ENCODE measurements at regions of chr11 and their contacts with region 1.

Region 1: GRCh38 chr11:61792310-61793085 is at the starts of genes FEN1 and TMEM258:
- DNase-seq: peak; percentile 89 to 94 (median 90)
- ATAC-seq: peak; percentile 91
- H3K4me3 ChIP-seq: peak within 1 kb of the TSS; percentile 83
- H3K27ac ChIP-seq: peak within 1 kb of the TSS; percentile 100
- H3K4me1 ChIP-seq: peaks cover 16 to 18% of the 10 kb centered on the region in 2 experiments; a peak in 4 of 5 replicates
- H3K27me3 ChIP-seq: no peaks in the 10 kb centered on the region
- CTCF ChIP-seq: no peak
- EP300 ChIP-seq: no peak
- POLR2A ChIP-seq: peak; percentile 94
- RAD21 ChIP-seq: no peak
- polyA plus RNA-seq, gene FEN1: 58.1 to 86.8 TPM
- polyA plus RNA-seq, gene TMEM258: 794 to 856 TPM

Region 2: DNA sequence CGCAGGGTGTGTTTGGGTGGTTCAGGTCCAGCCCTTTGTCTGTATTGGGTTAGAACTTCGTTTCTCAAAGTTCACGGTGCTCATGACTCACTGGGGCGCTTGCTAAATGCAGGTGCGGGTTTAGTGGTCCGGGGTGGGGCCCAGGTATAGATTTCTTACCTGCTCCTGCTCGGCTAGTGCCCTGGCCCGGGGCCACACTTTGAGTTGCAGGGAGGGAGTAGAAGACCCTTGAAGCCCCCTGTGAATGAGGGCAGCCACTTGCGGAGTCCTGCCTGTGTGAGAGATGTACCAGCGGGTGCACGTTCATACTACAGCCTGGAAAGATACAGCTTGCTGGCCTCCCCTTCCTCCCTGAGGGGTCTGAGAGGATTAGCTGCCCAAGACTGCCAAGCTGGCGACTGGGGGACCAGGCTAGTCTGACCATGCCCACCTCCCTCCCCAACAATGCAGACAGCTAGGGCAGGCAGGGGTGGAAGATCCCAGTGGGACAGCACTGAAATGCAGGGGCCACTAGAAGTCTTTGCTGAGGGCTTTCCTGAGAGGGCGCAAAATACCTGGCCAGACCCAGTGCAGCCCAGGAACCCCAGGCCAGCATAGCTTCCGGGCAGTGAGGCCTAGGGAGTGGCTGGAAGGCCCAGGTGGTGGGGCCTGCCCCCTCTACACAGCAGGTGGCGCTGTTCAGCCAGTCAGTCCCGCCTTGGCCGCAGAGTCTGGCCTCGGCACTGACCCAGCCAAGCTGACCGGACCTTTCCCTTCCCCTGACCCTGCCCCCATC is 45.1 kb before region 1 on chr11:
- CTCF ChIA-PET with region 1: interaction called, 4 read pairs
- POLR2A ChIA-PET with region 1: interaction called, 13 read pairs
- in situ Hi-C with region 1: loop called (anchors 5 kb)
- intact Hi-C with region 1: loop called (anchors 1 kb)
- DNase-seq: peak; percentile 86 to 90 (median 88)
- ATAC-seq: peak; percentile 90
- H3K4me3 ChIP-seq: no peak overlapping the region
- H3K27ac ChIP-seq: no peak overlapping the region
- H3K4me1 ChIP-seq: peaks cover 43 to 84% of the 10 kb centered on the region in 2 experiments
- H3K27me3 ChIP-seq: no peaks in the 10 kb centered on the region
- CTCF ChIP-seq: peak; percentile 94 to 96 (median 95)
- EP300 ChIP-seq: no peak
- POLR2A ChIP-seq: no peak
- RAD21 ChIP-seq: peak; percentile 90 to 97

Region 3: DNA sequence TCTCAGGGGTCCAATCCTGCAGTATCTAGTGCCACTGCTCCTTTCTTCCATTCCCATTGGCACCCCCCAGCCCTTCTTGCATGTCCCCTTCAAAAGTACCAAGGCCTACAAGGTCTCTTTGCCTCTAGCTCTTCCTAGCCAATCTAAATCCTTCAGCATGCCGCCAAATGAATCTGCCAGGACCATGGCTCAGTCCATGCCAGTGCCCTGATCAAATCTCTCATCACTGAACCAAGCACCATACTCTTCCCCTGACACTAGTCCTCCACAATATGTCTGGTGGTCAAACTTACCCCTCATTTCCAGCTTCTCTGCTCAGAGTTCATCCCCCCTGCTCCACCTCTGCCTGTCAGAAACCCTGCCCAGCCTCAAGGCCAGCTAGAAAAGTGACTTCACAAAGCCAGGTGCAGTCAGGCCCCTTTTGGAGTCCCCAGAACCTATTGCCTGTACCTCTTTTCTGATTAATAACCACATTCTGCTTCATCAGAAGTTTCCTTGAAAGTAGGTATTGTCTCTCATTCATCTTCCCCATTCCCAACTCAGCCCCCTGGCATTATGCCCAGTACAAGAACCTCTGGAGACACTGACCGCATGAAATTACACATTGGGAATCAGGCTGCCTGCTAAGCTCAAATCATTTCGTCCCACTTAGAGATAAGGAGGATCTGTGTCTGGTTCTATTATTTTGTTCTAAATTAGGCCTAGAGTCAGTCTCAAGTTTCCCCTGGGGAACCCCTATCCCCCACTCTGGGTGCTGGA is 11.6 kb after region 1 on chr11:
- CTCF ChIA-PET with region 1: no interaction called
- POLR2A ChIA-PET with region 1: interaction called, 25 read pairs
- in situ Hi-C with region 1: no loop called
- intact Hi-C with region 1: no loop called
- DNase-seq: no peak
- ATAC-seq: no peak
- H3K4me3 ChIP-seq: no peak overlapping the region
- H3K27ac ChIP-seq: no peak overlapping the region
- H3K4me1 ChIP-seq: peaks cover 37 to 53% of the 10 kb centered on the region in 2 experiments
- H3K27me3 ChIP-seq: no peaks in the 10 kb centered on the region
- CTCF ChIP-seq: no peak
- EP300 ChIP-seq: no peak
- POLR2A ChIP-seq: peak; percentile 58
- RAD21 ChIP-seq: no peak

Region 4: GRCh38 chr11:61871158-61871597 is 78.7 kb after region 1 on chr11:
- CTCF ChIA-PET with region 1: no interaction called
- POLR2A ChIA-PET with region 1: interaction called, 13 read pairs
- in situ Hi-C with region 1: no loop called
- intact Hi-C with region 1: loop called (anchors 2 kb)
- DNase-seq: peak; percentile 88 to 93 (median 90)
- ATAC-seq: peak; percentile 94
- H3K4me3 ChIP-seq: no peak overlapping the region
- H3K27ac ChIP-seq: peak overlapping the region; percentile 85
- H3K4me1 ChIP-seq: peaks cover 43 to 76% of the 10 kb centered on the region in 2 experiments
- H3K27me3 ChIP-seq: no peaks in the 10 kb centered on the region
- CTCF ChIP-seq: peak; percentile 91 to 97 (median 96)
- EP300 ChIP-seq: no peak
- POLR2A ChIP-seq: no peak
- RAD21 ChIP-seq: peak; percentile 93 to 96

Region 5: DNA sequence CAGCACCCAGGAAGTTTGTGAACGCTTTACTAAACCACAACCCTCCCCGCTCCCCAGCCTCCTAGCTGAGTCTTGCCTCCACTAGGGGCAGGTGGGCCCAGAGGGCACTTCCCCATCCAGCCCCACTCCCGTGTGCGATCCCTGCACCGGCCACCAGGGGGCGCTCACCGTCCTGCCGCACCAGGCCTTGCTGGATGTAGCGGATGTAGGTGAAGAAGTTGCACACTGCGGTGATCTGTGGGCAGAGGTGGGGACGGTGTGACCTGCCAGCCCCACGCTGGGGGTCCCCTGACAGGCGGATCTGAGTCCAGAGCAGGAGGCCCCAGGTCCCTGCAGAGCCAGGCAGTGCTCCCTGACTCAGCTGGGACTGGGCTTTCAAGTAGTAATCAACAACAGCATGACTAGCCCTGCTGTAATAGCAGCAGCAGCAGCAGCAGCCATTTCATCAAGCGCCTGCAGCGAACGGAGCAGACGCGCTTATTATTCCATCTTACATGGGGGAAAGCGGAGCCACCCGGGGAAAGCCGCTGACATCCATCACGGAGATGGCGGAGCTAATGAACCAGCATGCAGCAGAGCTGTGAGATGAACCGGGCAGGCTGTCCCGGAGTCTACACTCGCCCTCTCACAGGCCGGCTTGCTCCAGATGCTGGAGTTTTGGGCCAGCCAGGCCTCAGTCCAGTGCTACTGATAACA is 106.8 kb after region 1 on chr11:
- CTCF ChIA-PET with region 1: interaction called, 8 read pairs
- POLR2A ChIA-PET with region 1: interaction called, 5 read pairs
- in situ Hi-C with region 1: no loop called
- intact Hi-C with region 1: loop called (anchors 2 kb)
- DNase-seq: peak; percentile 89 to 94 (median 94)
- ATAC-seq: peak; percentile 93
- H3K4me3 ChIP-seq: no peak overlapping the region
- H3K27ac ChIP-seq: no peak overlapping the region
- H3K4me1 ChIP-seq: peaks cover 4 to 34% of the 10 kb centered on the region in 2 experiments; a peak in 4 of 5 replicates
- H3K27me3 ChIP-seq: no peaks in the 10 kb centered on the region
- CTCF ChIP-seq: peak; percentile 99
- EP300 ChIP-seq: no peak
- POLR2A ChIP-seq: no peak
- RAD21 ChIP-seq: peak; percentile 97 to 99

Region 6: GRCh38 chr11:62108017-62108750 is 315.7 kb after region 1 on chr11:
- CTCF ChIA-PET with region 1: interaction called, 9 read pairs
- POLR2A ChIA-PET with region 1: interaction called, 8 read pairs
- in situ Hi-C with region 1: no loop called
- intact Hi-C with region 1: loop called (anchors 2 kb)
- DNase-seq: peak; percentile 44 to 80 (median 48)
- ATAC-seq: peak; percentile 74
- H3K4me3 ChIP-seq: no peak overlapping the region
- H3K27ac ChIP-seq: no peak overlapping the region
- H3K4me1 ChIP-seq: peaks cover 7 to 16% of the 10 kb centered on the region in 2 experiments
- H3K27me3 ChIP-seq: no peaks in the 10 kb centered on the region
- CTCF ChIP-seq: peak; percentile 74 to 92 (median 79)
- EP300 ChIP-seq: no peak
- POLR2A ChIP-seq: no peak
- RAD21 ChIP-seq: peak; percentile 92

Measured in K562 (cell line).